Psoas muscle (tissue), 8 donors: ENCODE measurements at regions of chr5 and their contacts with region 1.

Region 1: DNA sequence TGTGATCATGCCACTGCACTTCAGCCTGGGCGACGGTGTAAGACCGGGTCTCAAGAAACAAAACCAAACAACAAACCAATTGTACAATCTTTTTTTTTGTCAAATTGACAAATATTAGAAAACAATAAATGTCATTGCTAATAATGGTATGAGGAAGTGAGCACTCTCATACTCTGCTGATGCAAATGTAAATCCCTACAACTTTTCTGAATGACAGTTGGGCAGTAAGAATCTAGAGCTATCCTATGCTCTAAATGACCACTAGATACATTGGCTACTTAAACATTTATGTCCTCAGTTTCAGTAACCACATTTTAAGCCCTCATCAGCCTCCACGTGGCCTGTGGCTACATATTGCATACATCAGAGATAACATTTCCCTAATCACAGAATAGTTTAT is 256.2 kb downstream of the FER start:
- DNase-seq: no peak
- ATAC-seq: no peak
- H3K4me3 ChIP-seq: no peak overlapping the region
- H3K27ac ChIP-seq: no peak overlapping the region
- H3K4me1 ChIP-seq: no peaks in the 10 kb centered on the region
- H3K27me3 ChIP-seq: no peaks in the 10 kb centered on the region
- CTCF ChIP-seq: no peak

Region 2: DNA sequence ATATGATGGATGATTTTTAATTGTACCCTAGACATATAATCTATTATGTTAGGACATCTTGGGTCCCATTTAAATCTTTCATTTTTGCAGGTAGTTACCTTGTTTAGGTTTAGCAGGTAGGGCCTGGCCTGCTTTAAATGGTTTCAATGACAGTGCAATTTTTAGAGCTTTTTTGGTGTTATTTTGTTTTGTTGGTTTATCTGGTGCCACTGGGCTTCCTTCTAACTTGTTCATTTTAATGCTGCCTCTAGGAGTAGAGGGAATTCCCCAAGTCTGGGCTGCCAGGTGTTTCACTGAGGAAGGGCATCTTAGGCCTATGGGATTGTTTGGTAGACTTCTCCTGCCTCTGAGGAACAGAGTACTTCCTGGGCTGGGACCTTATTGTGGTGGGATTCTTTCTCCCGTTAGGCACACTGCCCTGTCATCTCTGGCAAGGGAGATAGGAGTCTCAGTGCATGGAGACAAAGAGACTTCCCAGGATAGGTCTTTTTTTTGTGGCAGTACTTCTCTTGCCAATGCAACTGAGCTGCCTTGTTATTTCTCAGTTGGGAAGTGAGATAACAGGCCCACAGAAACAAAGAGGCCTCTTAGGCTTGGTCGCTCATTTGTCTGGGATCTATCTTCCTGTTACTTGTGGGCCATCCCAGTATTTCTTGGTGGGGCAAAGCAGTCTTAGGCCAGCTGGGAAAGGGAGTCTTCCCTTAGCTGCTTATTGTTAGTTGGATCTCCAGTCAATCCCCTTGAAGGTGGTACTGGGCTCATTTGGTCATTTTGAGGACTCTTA is 26.6 kb after region 1 on chr5:
- intact Hi-C with region 1: loop called in 1 of 2 experiments (anchors 1 kb)
- DNase-seq: no peak
- ATAC-seq: no peak
- H3K4me3 ChIP-seq: no peak overlapping the region
- H3K27ac ChIP-seq: no peak overlapping the region
- H3K4me1 ChIP-seq: no peaks in the 10 kb centered on the region
- H3K27me3 ChIP-seq: no peaks in the 10 kb centered on the region
- CTCF ChIP-seq: no peak